ENCODE measurements at regions of chr2 and their contacts with region 1.

Region 1: GRCh38 chr2:167943897-167944296 is 303.5 kb downstream of the STK39 start:
- DNase-seq: no peak
- ATAC-seq: no peak
- H3K4me3 ChIP-seq: no peak overlapping the region
- H3K27ac ChIP-seq: peak overlapping the region; percentile 86
- H3K4me1 ChIP-seq: peaks cover 3 to 48% of the 10 kb centered on the region in 2 experiments; a peak in 3 of 5 replicates
- H3K27me3 ChIP-seq: no peaks in the 10 kb centered on the region
- CTCF ChIP-seq: no peak
- EP300 ChIP-seq: no peak
- POLR2A ChIP-seq: no peak
- RAD21 ChIP-seq: no peak

Region 2: GRCh38 chr2:167814881-167815718 is 128.8 kb before region 1 on chr2:
- CTCF ChIA-PET with region 1: no interaction called
- POLR2A ChIA-PET with region 1: no interaction called
- in situ Hi-C with region 1: no loop called
- intact Hi-C with region 1: no loop called
- DNase-seq: no peak
- ATAC-seq: no peak; the same call in 1 of the 3 replicates
- H3K4me3 ChIP-seq: no peak overlapping the region
- H3K27ac ChIP-seq: no peak overlapping the region
- H3K4me1 ChIP-seq: no peaks in the 10 kb centered on the region
- H3K27me3 ChIP-seq: no peaks in the 10 kb centered on the region
- CTCF ChIP-seq: no peak
- EP300 ChIP-seq: no peak
- POLR2A ChIP-seq: no peak
- RAD21 ChIP-seq: no peak

Region 3: DNA sequence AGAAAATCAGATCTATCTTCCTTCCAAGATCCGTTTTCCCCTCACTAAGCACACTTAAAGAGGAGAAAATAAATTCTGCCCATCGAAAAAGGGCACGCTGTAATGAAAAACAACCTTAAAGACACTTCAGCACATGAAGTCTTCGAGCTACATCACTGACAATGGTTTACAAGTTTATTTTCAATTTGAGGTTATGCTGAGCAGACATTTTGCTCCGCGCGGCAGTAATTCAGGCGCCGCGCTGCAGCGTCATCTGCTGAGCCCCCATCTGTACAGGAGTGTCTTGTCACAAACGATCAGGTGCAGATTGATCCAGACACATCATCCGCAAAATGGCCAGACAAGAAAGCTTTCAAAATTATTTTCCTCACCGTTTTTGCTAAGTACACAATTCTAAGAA is 38.2 kb before region 1 on chr2:
- CTCF ChIA-PET with region 1: no interaction called
- POLR2A ChIA-PET with region 1: interaction called, 29 read pairs
- in situ Hi-C with region 1: no loop called
- intact Hi-C with region 1: no loop called
- DNase-seq: no peak
- ATAC-seq: no peak
- H3K4me3 ChIP-seq: no peak overlapping the region
- H3K27ac ChIP-seq: no peak overlapping the region
- H3K4me1 ChIP-seq: no peaks in the 10 kb centered on the region
- H3K27me3 ChIP-seq: no peaks in the 10 kb centered on the region
- CTCF ChIP-seq: no peak
- EP300 ChIP-seq: no peak
- POLR2A ChIP-seq: no peak
- RAD21 ChIP-seq: no peak

Region 4: DNA sequence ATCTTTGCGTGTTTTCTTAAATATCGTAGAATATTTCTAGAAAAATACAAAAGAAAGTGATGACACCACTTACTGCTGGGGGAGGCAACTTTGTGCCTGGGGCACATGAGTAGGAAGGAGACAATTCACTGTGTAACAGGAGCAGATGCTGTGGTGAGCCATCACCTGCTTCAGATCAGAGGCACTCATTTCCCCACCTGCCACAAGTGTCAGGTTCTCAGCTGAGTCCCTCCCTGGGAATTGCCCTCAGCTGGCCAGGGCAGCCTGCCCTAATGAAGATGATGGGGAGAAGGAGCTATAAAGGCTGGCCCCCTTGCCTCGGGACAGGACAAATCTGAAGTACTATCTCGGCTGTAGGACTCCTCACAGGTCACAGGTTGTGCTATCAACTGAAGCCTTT is 19.3 kb before region 1 on chr2:
- CTCF ChIA-PET with region 1: no interaction called
- POLR2A ChIA-PET with region 1: interaction called, 94 read pairs
- in situ Hi-C with region 1: no loop called
- intact Hi-C with region 1: no loop called
- DNase-seq: no peak
- ATAC-seq: peak; percentile 14; the same call in 2 of the 3 replicates
- H3K4me3 ChIP-seq: no peak overlapping the region
- H3K27ac ChIP-seq: no peak overlapping the region
- H3K4me1 ChIP-seq: peaks cover 0 to 5% of the 10 kb centered on the region in 2 experiments; a peak in 1 of 5 replicates
- H3K27me3 ChIP-seq: no peaks in the 10 kb centered on the region
- CTCF ChIP-seq: no peak
- EP300 ChIP-seq: no peak
- POLR2A ChIP-seq: no peak
- RAD21 ChIP-seq: no peak

Region 5: DNA sequence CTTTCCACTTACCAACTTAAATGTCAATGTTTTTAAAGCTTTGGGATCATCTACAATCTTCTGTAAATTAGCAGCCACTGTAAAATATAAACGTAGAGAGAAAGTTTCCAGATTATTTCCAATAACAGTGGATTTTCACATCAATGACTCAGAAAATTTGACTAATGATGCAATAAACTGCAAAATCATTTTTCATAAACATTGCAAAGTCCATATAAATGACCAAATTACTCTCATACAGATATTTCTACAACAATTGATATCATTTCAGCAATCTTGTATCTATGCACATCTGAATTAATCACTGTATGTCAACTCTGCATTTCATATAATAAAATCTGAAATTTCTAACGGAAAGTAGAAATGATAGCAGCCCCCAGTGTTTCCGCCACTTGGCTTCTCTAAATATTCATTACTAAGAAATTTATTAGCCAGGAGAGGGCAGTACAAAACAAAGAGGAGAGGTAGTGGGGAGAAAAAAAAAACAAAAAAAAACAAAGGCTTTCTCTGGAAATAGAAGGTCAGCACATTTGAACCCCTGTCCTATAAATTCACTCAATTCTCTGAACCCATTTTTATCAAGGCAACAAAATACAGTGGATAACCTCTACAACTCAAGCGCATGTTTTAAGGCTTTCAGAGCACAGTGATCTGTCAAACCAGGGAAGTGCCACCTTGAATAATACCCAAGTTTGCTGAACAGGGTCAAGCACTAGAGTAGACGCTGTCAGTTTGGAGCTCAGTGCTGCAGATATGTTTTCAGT is 20.9 kb after region 1 on chr2:
- CTCF ChIA-PET with region 1: no interaction called
- POLR2A ChIA-PET with region 1: interaction called, 66 read pairs
- in situ Hi-C with region 1: no loop called
- intact Hi-C with region 1: loop called (anchors 1 kb)
- DNase-seq: peak in 2 of 4 experiments; percentile 27 to 36
- ATAC-seq: peak; percentile 18; the same call in 2 of the 3 replicates
- H3K4me3 ChIP-seq: no peak overlapping the region
- H3K27ac ChIP-seq: peak overlapping the region; percentile 58; the same call in 2 of the 3 replicates
- H3K4me1 ChIP-seq: peaks cover 7 to 46% of the 10 kb centered on the region in 2 experiments; a peak in 4 of 5 replicates
- H3K27me3 ChIP-seq: no peaks in the 10 kb centered on the region
- CTCF ChIP-seq: peak; percentile 34 to 58 (median 36); a peak in 4 of 6 replicates
- EP300 ChIP-seq: no peak; the same call in 1 of the 2 replicates
- POLR2A ChIP-seq: no peak
- RAD21 ChIP-seq: peak; percentile 58 to 60

Region 6: GRCh38 chr2:168075446-168075845 is 131.5 kb after region 1 on chr2:
- CTCF ChIA-PET with region 1: no interaction called
- POLR2A ChIA-PET with region 1: no interaction called
- in situ Hi-C with region 1: no loop called
- intact Hi-C with region 1: no loop called
- DNase-seq: no peak
- ATAC-seq: no peak
- H3K4me3 ChIP-seq: no peak overlapping the region
- H3K27ac ChIP-seq: no peak overlapping the region
- H3K4me1 ChIP-seq: no peaks in the 10 kb centered on the region
- H3K27me3 ChIP-seq: peaks cover 8 to 9% of the 10 kb centered on the region in 2 experiments; a peak in 3 of 5 replicates
- CTCF ChIP-seq: no peak
- EP300 ChIP-seq: no peak
- POLR2A ChIP-seq: no peak
- RAD21 ChIP-seq: no peak

Region 7: DNA sequence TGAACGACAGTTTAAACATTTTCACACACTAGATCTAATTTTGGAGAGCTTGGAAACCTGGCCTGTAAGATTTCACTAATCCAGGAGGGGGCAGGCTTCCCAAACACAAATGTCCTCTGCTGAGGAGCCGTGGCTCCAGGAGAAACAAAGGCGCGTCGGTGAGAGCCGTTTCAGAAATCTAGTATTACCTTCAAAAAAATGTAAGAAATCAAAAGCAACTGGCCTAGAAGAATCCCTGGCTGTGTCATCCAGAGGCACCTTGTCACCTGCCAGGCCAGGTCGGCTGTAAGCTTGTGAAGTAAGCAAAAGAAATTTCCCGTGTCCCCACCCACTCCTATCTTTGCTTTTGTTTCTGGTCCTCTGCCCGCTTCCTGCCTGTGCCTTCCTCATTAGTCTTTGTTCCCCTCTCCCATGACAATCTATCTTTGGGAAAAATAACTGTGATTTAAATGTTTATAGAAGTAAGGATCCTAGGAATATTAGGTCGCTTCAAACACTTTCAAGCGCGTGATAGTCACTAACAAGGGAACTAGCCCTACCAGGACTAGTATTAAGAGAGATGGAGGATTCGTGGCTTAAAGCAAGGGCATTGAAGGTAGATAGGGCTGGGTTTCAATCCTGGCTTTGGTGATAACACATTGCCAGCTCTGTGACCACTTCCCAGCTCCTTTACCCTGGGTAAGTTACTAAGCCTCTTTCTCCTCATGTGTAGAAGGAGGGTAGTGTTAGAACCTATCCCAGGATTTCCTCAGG is 403.0 kb after region 1 on chr2:
- CTCF ChIA-PET with region 1: no interaction called
- POLR2A ChIA-PET with region 1: no interaction called
- in situ Hi-C with region 1: no loop called
- intact Hi-C with region 1: no loop called
- DNase-seq: peak; percentile 69 to 84 (median 72)
- ATAC-seq: peak; percentile 91
- H3K4me3 ChIP-seq: peak overlapping the region; percentile 34
- H3K27ac ChIP-seq: no peak overlapping the region
- H3K4me1 ChIP-seq: no peaks in the 10 kb centered on the region; a peak in 1 of 5 replicates
- H3K27me3 ChIP-seq: 0 out of 5 replicates have a peak, but pooled peaks cover under 1 to 4% of the 10 kb centered on the region in 2 experiments
- CTCF ChIP-seq: peak; percentile 78 to 88 (median 83)
- EP300 ChIP-seq: 0 out of 2 replicates have a peak, but pooled peaks have one; percentile 13
- POLR2A ChIP-seq: no peak
- RAD21 ChIP-seq: peak; percentile 96 to 98

Region 8: DNA sequence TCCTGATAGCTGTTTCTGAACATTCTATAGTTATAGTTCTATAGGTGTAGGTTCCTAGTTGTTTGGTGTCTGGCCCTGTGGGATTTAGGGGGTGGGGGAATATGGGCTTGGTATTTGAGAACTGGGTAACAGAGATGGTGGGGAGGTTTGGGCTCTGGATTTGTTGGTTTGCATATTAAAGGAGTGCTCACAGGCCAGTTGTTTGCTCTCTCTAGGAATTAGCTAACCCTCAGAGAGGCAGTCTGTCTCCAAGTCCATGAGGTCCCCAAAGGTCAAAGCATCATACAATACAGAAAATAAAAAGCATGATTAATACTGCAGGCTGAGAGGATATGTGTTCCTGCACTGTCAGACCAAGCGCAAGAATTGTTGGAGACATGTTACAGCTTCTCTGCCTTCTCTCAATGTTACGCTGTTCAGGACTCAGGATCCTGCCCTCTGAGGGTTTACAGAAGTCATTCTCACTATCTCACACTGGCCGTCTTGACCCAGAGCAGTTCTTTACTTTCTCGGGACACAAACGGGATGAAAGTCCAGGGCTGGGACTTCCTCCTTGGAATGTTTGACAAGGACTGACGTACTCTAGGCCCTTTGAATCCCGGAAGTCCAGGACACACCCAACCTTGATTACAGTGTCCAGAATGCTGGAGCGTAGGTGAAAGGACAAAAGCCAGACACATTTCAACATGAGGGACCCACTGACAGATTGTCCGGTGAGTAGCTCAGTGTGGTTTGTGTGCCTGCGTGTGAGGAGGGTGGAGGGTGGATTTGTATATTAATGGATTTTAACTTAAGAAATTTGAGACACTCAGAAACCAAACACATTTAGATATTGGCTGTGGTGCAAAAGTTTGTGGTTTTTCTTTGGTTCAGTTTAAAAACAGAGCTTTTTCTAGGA is 858.3 kb after region 1 on chr2 and contains the start of gene NOSTRIN:
- CTCF ChIA-PET with region 1: no interaction called
- POLR2A ChIA-PET with region 1: no interaction called
- in situ Hi-C with region 1: no loop called
- intact Hi-C with region 1: loop called (anchors 10 kb)
- DNase-seq: peak; percentile 51 to 87 (median 61)
- ATAC-seq: peak; percentile 68
- H3K4me3 ChIP-seq: peak within 1 kb of the TSS; percentile 38
- H3K27ac ChIP-seq: peak within 1 kb of the TSS; percentile 89
- H3K4me1 ChIP-seq: peaks cover 18 to 81% of the 10 kb centered on the region in 2 experiments
- H3K27me3 ChIP-seq: no peaks in the 10 kb centered on the region
- CTCF ChIP-seq: no peak; a peak in 1 of 6 replicates
- EP300 ChIP-seq: peak; percentile 45
- POLR2A ChIP-seq: peak; percentile 69
- RAD21 ChIP-seq: no peak; a peak in 1 of 4 replicates
- polyA plus RNA-seq, gene NOSTRIN: 51.9 to 82.9 TPM